Esophagus muscularis mucosa (tissue), 4 donors: ENCODE measurements at regions of chr6 and their contacts with region 1.

Region 1: GRCh38 chr6:42726485-42727086 is 4.2 kb upstream of the PRPH2 start:
- DNase-seq: no peak
- H3K4me3 ChIP-seq: peak overlapping the region; percentile 56 to 63 (median 60)
- H3K27ac ChIP-seq: peak overlapping the region; percentile 77 to 89 (median 80)
- H3K4me1 ChIP-seq: peaks cover 10 to 30% (median 23%) of the 10 kb centered on the region in 4 donors
- H3K27me3 ChIP-seq: no peaks in the 10 kb centered on the region
- CTCF ChIP-seq: peak; percentile 89 to 98 (median 92)
- EP300 ChIP-seq: no peak
- POLR2A ChIP-seq: no peak

Region 2: DNA sequence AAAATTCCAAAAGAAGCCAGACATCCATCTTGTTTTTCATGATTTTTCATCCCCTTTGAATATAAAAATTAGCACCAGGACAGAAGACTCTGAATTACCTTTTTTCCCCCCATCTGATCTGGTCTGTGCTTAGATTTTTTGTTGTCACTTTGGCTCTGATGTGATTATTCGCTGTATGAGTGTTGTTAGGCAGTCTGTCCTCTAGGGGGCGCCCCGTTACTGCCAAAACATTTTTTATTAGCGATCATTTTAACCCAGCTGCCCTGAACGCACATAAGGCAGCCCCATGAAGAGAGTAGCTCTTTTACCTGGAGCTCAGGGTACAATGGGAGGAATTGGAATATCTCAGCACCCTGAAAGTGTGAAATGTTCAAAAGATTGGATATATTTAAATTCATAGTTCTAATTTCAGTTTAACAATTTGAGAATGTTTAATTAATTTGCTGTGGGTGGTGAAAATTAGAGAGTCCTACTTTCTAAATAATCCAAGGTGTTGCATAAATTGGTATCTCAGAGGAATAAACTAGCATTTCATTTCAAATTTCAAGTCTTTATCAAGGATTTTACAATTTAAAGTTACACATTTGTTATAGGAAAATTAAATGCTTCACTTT is 64.9 kb before region 1 on chr6:
- intact Hi-C with region 1: loop called (anchors 2 kb)
- DNase-seq: peak; percentile 96
- H3K4me3 ChIP-seq: no peak overlapping the region
- H3K27ac ChIP-seq: peak overlapping the region in 1 of 4 donors; percentile 24
- H3K4me1 ChIP-seq: peaks cover 0 to 4% (median 1%) of the 10 kb centered on the region in 4 donors
- H3K27me3 ChIP-seq: no peaks in the 10 kb centered on the region
- CTCF ChIP-seq: peak; percentile 83 to 93 (median 87)
- EP300 ChIP-seq: no peak
- POLR2A ChIP-seq: no peak

Region 3: DNA sequence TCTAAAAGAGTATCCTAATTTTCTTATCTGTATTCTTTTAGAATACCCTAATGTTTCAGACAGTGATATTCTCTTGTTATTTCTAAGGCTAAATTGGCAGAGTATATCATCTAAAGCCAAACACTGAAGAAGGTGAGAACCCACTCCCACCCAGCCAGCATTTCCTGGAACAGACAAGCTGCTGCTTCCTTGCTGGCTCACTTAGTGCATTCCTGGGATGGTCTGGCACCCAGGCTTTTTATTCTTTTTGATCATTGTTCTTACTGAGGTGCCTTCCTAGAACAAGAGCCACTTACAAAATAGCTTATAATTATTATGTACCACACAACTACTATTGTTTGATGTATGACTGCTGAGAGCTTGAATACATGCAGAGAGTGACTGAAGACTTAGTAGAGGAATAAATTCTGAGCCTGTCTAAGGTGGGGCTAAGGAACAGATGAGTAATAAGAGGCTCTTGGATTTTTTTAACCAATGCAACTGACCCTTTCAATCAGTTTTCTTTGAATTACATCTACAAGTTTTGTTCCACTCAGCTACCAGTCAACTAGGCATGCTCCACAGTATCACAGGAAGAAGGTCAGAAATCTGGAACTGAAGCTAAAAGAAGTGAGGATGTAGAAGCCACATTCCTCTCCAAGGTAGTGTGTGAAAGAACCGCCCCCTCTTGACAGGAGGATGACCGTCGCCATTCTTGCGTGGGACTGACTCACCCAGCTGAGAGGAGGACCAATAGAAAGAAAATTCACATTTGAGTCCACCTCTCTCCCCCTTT is 34.3 kb before region 1 on chr6:
- intact Hi-C with region 1: loop called (anchors 5 kb)
- DNase-seq: no peak
- H3K4me3 ChIP-seq: no peak overlapping the region
- H3K27ac ChIP-seq: peak overlapping the region; percentile 67 to 80 (median 72)
- H3K4me1 ChIP-seq: peaks cover 22 to 73% (median 55%) of the 10 kb centered on the region in 4 donors
- H3K27me3 ChIP-seq: no peaks in the 10 kb centered on the region
- CTCF ChIP-seq: no peak
- EP300 ChIP-seq: no peak
- POLR2A ChIP-seq: no peak

Region 4: GRCh38 chr6:43159599-43159998 is 433.0 kb after region 1 on chr6:
- intact Hi-C with region 1: no loop called
- DNase-seq: no peak
- H3K4me3 ChIP-seq: no peak overlapping the region
- H3K27ac ChIP-seq: no peak overlapping the region
- H3K4me1 ChIP-seq: no peaks in the 10 kb centered on the region
- H3K27me3 ChIP-seq: no peaks in the 10 kb centered on the region
- CTCF ChIP-seq: no peak
- EP300 ChIP-seq: no peak
- POLR2A ChIP-seq: no peak